Activated CD4-positive, alpha-beta T cell treated with anti-CD3 and anti-CD28 coated beads for 36 hours (primary cell): ENCODE measurements at regions of chr10 and their contacts with region 1.

Region 1: DNA sequence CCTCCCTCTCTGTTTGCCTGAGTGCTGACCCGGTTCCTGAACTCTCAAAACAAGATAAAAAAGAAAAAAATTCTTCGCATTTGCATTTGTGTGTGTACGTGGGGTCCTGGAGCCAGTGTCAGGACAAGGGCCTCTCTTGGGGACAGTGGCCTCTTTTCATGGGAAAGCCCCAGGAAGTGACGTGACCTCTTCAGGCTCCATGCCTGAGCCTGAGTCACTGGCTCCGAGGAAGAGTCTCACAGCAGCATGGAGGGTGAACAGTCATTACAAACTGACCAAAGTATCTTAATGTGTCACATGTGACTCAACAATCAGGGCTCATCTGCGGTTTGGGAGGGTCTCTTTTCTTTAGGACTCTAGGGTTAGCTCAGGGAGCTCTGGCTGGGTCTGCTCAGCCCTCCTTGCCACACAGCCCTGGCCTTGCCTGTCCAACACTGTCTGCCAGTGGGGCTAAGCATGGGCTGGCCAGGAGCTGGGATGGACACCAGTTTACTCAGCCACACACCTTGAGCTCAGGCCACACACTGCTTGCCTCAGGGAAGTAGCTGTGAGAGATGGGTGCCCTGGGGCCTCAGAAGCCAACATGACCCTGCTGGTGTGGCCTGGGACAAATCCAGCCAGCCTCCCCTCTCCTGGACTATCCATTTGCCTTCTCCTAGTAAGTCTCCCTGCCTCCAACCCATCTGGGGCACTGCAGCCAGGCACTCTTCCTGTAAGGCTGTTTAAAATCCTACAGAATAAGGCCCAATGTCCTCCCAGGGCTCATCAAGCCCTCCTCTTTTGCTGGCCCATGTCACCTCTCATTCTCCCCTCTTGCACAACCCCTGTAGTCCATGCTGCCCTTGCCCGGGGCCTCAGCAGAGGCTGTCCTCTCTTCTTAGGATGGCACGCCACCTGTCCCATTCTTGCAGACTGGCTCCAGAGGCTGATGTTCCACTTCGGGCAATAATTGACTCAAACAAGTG is 10.5 kb downstream of the TMEM273 start:
- DNase-seq: peak; percentile 83
- ATAC-seq: peak; percentile 90
- H3K4me3 Mint-ChIP-seq: peak overlapping the region; percentile 43
- H3K27ac Mint-ChIP-seq: peak overlapping the region; percentile 79
- H3K4me1 Mint-ChIP-seq: peaks cover 47% of the 10 kb centered on the region
- H3K27me3 Mint-ChIP-seq: peaks cover 4% of the 10 kb centered on the region

Region 2: DNA sequence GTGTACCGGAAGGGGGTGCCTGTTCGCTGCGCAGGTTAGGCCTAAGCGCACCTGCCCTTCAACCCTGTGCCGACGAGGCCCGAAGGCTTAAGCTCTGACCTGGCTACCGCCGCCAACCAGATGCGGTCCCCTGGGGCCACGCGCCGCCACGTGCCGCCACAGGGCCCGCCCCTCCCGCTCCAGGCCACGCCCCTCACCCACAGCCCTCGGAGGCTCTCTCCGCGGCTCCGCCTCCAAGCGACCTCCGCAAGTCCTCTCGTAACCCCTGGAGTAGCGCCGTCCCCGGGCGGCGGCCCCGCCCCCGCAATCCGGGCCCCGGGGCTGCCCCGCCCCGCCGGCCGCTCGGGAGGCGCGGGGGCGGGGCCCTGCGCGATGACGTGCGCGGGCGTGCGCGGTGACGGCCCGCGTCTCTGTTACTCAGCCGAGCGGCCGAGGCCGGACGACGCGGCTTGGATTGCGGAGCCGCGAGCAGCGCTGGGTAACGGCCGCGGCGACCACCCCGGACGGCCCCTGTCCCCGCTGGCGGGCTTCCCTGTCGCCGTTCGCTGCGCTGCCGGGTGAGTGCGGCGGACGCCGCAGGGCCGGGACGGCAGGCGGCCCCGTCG is 871.3 kb before region 1 on chr10 and contains the start of gene MAPK8:
- CTCF ChIA-PET with region 1: no interaction called
- POLR2A ChIA-PET with region 1: interaction called, 3 read pairs
- intact Hi-C with region 1: loop called in 1 of 2 experiments (anchors 5 kb)
- DNase-seq: peak; percentile 93
- ATAC-seq: peak; percentile 86
- H3K4me3 Mint-ChIP-seq: peak within 1 kb of the TSS; percentile 72
- H3K27ac Mint-ChIP-seq: peak within 1 kb of the TSS; percentile 58
- H3K4me1 Mint-ChIP-seq: peaks cover 30% of the 10 kb centered on the region
- H3K27me3 Mint-ChIP-seq: no peaks in the 10 kb centered on the region
- total RNA-seq, gene MAPK8: 35.7 to 40.0 TPM

Region 3: GRCh38 chr10:49080071-49080470 is 97.6 kb before region 1 on chr10:
- CTCF ChIA-PET with region 1: no interaction called
- POLR2A ChIA-PET with region 1: no interaction called
- intact Hi-C with region 1: loop called (anchors 5 kb)
- DNase-seq: peak; percentile 13
- ATAC-seq: peak; percentile 47
- H3K4me3 Mint-ChIP-seq: no peak overlapping the region
- H3K27ac Mint-ChIP-seq: no peak overlapping the region
- H3K4me1 Mint-ChIP-seq: peaks cover 23% of the 10 kb centered on the region
- H3K27me3 Mint-ChIP-seq: peaks cover 6% of the 10 kb centered on the region

Region 4: DNA sequence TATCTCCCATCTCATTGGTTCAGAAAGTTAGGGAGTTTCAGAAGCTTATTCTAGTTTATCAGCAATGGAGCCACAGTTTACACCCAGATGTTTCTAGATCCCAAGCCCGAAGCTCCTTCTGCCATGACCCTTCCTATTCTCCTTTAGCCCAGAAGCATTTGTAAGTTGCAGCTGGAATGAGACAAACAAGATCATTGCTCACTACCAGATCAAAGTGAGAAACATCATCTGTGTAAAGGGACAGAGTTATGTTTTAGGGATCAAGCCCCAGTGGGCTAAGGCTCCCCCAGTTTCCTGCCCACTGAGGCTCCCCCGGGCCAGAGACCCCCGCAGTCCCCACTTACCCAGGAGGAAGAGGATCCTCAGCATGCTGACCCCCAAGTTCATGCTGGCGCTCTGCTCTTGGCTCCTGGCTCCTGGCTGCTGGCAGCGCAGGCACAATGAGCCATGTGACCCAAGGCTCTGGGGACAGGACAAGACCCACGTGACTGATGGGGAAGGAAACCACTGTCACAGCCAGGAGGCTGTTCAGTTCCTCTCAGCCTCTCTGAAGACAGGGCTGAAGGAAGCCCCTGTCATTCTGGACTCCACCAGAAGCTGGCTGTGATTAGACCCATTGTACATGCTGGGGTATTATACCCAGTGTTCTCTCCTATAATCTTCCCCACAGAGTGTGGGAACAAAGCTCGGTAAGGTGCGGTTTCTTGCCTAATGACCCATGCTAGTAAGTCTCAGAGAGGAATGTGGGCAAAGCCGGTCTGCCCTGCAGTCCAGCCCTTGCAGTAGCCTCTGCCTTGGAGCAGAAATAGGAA is 10.5 kb after region 1 on chr10 and contains the start of gene TMEM273:
- CTCF ChIA-PET with region 1: no interaction called
- POLR2A ChIA-PET with region 1: no interaction called
- intact Hi-C with region 1: loop called in 1 of 2 experiments (anchors 1 kb)
- DNase-seq: peak; percentile 48
- ATAC-seq: peak; percentile 59
- H3K4me3 Mint-ChIP-seq: peak within 1 kb of the TSS; percentile 57
- H3K27ac Mint-ChIP-seq: peak within 1 kb of the TSS; percentile 68
- H3K4me1 Mint-ChIP-seq: peaks cover 23% of the 10 kb centered on the region
- H3K27me3 Mint-ChIP-seq: peaks cover 23% of the 10 kb centered on the region
- total RNA-seq, gene TMEM273: 26.5 to 28.0 TPM

Region 5: DNA sequence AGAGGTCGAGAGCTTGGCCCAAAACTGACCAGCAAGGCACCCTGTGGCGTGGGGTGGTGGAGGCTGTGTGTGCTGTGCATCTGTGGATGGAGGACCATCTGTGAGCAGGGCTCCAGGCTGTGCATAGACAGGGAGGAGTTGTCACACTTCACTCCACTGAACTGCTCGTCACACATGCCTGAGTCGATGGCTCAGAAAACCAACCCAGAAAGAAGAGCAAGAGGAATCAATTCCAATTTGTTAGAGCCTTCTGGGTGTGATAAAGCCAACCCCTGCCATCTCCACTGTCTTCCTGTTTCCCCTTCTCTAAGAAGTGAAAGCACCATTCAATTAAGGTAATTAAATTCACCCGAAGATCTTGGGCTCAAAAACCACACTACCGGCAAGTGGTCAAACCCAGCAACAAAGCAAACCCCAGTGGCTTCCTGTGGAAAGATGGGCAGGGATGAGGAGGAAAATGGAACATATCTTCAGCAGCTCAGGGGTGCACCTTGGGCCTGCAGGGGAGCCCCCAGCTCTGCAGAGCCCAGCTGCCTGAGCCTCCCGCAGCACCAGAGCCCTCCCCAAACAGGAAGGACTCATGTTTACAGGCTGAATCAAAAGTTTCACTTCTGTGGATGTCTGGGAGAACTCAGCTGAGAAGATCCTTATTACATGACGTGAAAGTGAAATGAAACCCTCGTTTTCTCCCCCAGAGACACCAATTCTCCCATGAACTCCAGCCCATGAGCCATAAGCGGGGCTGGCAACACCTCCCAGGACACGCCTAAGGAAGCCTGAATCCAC is 132.1 kb after region 1 on chr10:
- CTCF ChIA-PET with region 1: no interaction called
- POLR2A ChIA-PET with region 1: no interaction called
- intact Hi-C with region 1: loop called in 1 of 2 experiments (anchors 2 kb)
- DNase-seq: peak; percentile 24
- ATAC-seq: peak; percentile 31
- H3K4me3 Mint-ChIP-seq: no peak overlapping the region
- H3K27ac Mint-ChIP-seq: no peak overlapping the region
- H3K4me1 Mint-ChIP-seq: peaks cover 19% of the 10 kb centered on the region
- H3K27me3 Mint-ChIP-seq: no peaks in the 10 kb centered on the region

Region 6: DNA sequence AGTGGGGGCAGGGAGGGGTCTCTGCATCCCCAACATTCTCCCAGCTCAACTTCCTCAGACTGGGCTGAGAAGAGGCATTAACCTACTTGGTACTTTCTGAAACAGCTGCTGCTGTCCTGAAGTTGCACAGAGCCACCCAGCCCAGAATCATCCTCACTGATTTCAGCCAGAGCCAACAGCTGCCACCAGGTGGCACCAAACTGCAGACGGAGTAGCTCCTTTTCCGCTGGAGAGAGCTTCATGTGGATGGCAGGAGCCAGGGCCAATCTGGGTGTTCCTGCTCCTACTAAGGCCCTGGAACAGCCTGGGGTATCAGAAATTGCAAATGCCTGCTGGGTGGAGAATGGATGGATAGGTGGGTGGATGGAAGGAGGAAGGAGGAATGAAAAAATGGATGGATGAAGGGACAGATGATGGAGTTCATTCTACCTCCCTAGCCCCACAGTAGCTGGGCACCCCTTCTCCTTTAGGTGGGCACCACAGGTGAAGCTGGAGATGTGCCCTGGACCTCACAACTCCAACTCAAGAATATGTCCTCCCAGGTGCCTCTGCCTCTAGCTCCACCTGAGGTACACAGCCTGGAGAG is 230.0 kb after region 1 on chr10:
- CTCF ChIA-PET with region 1: no interaction called
- POLR2A ChIA-PET with region 1: no interaction called
- intact Hi-C with region 1: no loop called
- DNase-seq: peak; percentile 86
- ATAC-seq: peak; percentile 75
- H3K4me3 Mint-ChIP-seq: no peak overlapping the region
- H3K27ac Mint-ChIP-seq: no peak overlapping the region
- H3K4me1 Mint-ChIP-seq: no peaks in the 10 kb centered on the region
- H3K27me3 Mint-ChIP-seq: peaks cover 33% of the 10 kb centered on the region

Region 7: GRCh38 chr10:49538381-49539319 is 361.0 kb after region 1 on chr10 and contains the start of gene ERCC6:
- CTCF ChIA-PET with region 1: no interaction called
- POLR2A ChIA-PET with region 1: no interaction called
- intact Hi-C with region 1: loop called in 1 of 2 experiments (anchors 2 kb)
- DNase-seq: peak; percentile 98
- ATAC-seq: peak; percentile 96
- H3K4me3 Mint-ChIP-seq: peak within 1 kb of the TSS; percentile 78
- H3K27ac Mint-ChIP-seq: peak within 1 kb of the TSS; percentile 90
- H3K4me1 Mint-ChIP-seq: peaks cover 34% of the 10 kb centered on the region
- H3K27me3 Mint-ChIP-seq: peaks cover 9% of the 10 kb centered on the region
- total RNA-seq, gene ERCC6: 15.0 to 15.8 TPM